A549 (cell line): ENCODE measurements at regions of chr18 and their contacts with region 1.

Region 1: DNA sequence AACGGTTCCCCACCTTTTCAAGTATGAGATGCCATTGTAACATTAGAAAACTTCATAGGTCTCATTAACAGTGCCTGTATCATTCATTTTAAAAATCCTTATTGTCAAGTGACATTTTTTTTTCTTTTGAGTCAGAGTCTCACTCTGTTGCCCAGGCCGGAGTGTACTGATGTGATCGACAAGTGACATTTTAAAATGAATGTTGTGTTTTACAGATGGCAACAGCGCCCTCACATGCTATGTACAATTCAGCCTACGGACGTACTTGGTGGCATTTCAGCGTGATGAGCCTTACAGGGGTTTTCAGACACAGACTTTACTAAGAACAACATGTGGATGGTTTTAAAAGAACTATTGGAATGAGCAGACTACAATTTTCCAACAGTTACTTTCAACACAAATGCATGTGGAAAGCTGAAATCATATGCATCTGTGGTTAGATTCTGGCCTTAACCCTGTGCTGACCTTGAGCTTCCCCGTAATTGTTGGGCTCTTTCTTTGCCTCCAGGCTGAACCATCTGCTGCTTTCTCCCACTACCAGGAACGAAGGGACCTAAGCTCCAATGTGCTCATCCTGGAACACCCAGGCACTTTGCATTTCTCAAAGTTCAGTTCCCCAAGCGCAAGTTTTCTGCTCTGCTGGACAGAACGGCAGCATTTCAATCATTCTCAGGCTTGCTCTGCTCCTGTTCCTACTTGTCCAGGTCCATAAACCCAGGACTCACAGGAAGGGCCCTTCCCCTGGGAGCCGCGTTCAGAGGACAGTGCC is 119.9 kb upstream of the NDUFV2 start:
- DNase-seq: peak; percentile 44 to 83
- ATAC-seq: peak; percentile 89 to 96
- H3K4me3 ChIP-seq: no peak overlapping the region
- H3K27ac ChIP-seq: peak overlapping the region; percentile 56 to 89
- H3K4me1 ChIP-seq: peaks cover 39% of the 10 kb centered on the region
- CTCF ChIP-seq: peak; percentile 73
- EP300 ChIP-seq: no peak
- POLR2A ChIP-seq: no peak
- RAD21 ChIP-seq: peak; percentile 88 to 93

Region 2: DNA sequence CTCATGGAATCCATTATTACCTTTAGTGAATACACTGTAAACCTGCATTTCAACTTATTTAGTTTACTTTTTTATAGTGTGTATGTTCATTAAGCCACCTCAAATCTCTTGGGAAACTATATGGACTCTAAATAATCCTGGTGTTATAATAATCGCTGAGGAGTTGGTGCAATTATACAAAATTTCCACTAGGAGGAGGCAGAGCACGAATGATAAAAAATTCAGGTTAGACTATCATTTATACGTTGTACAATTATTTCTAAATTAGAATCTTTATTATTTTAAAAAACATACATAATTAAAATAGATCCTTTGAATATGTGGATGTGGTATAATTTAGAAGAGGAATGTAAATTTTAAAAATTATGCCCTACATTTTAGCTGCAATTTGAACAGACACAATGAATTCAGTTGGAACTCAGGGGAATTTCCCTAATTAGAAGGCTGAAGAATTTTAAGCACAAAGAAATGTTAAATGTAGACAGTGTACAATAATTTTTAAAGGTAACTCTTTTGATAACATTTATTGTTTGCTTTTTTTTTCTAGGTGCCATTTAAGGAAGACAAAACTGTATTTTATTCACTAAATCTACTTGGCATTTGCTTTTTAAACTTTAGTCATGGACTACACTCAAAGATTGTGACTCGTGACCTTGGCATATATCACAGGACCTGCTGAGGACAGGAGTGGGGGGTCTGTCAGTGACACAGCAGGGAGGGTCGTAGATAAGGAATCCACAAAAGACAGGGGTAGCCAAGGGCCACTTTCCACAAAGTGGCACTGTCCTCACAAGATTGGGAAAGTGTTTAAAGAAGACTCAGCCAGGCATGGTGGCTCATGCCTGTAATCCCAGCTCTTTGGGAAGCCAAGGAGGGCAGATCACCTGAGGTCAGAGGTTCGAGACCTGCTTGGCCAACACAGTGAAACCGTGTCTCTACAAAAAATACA is 327.8 kb before region 1 on chr18:
- CTCF ChIA-PET with region 1: interaction called, 70 read pairs
- POLR2A ChIA-PET with region 1: no interaction called
- DNase-seq: peak; percentile 22 to 43
- ATAC-seq: peak in 1 of 2 experiments; percentile 39; a peak in 1 of 6 replicates
- H3K4me3 ChIP-seq: no peak overlapping the region
- H3K27ac ChIP-seq: peak overlapping the region; percentile 26 to 72; a peak in 4 of 6 replicates
- H3K4me1 ChIP-seq: peaks cover 19% of the 10 kb centered on the region
- CTCF ChIP-seq: peak; percentile 86
- EP300 ChIP-seq: no peak
- POLR2A ChIP-seq: no peak
- RAD21 ChIP-seq: peak; percentile 81 to 83

Region 3: GRCh38 chr18:8696749-8697211 is 285.8 kb before region 1 on chr18:
- CTCF ChIA-PET with region 1: interaction called, 30 read pairs
- POLR2A ChIA-PET with region 1: no interaction called
- DNase-seq: peak; percentile 56 to 60
- ATAC-seq: peak; percentile 85 to 86; a peak in 5 of 6 replicates
- H3K4me3 ChIP-seq: no peak overlapping the region
- H3K27ac ChIP-seq: peak overlapping the region in 1 of 2 experiments; percentile 49; a peak in 1 of 6 replicates
- H3K4me1 ChIP-seq: peaks cover 17% of the 10 kb centered on the region
- CTCF ChIP-seq: peak; percentile 77
- EP300 ChIP-seq: no peak
- POLR2A ChIP-seq: no peak
- RAD21 ChIP-seq: peak; percentile 67 to 68

Region 4: DNA sequence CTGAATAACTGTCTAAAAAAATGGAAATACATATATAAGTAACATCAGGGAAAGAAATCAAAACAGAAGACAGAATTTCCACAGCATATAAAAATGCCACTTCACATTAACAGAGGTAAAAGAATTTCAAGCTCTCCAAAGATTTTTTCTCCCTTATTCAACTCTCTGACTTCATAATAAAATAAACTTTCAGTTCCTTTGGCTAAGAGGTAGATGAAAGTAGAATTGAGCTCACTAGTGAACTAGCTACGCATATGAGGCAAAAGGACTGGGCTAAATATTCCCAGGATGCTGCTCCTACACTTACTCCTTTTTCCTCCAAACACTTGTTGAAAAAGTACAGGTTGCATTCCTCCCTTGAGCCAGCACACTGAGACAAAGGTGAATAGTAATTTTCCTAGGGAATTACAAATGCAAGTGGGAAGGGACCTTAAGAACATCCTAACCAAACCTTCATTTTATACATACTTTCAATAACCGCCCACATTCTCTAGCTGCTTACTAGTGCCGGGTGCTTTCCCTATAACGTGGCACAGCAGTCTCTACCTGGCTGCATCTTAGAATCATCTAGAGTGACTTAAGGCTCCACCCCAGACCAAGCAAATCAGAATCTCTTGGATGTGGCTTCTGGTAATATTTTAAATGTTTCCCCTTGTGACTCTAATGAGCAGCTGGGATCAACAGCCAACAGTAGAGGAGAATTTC is 140.7 kb before region 1 on chr18:
- CTCF ChIA-PET with region 1: interaction called, 13 read pairs
- POLR2A ChIA-PET with region 1: no interaction called
- DNase-seq: no peak
- ATAC-seq: no peak
- H3K4me3 ChIP-seq: no peak overlapping the region
- H3K27ac ChIP-seq: no peak overlapping the region
- H3K4me1 ChIP-seq: no peaks in the 10 kb centered on the region
- CTCF ChIP-seq: no peak
- EP300 ChIP-seq: no peak
- POLR2A ChIP-seq: no peak
- RAD21 ChIP-seq: no peak

Region 5: GRCh38 chr18:8969639-8970390 is 12.8 kb before region 1 on chr18:
- CTCF ChIA-PET with region 1: interaction called, 12 read pairs
- POLR2A ChIA-PET with region 1: no interaction called
- DNase-seq: no peak
- ATAC-seq: no peak
- H3K4me3 ChIP-seq: no peak overlapping the region
- H3K27ac ChIP-seq: peak overlapping the region in 1 of 2 experiments; percentile 21; a peak in 1 of 6 replicates
- H3K4me1 ChIP-seq: no peaks in the 10 kb centered on the region
- CTCF ChIP-seq: no peak
- EP300 ChIP-seq: no peak
- POLR2A ChIP-seq: no peak
- RAD21 ChIP-seq: no peak

Region 6: GRCh38 chr18:9066817-9067306 is 84.3 kb after region 1 on chr18:
- CTCF ChIA-PET with region 1: no interaction called
- POLR2A ChIA-PET with region 1: no interaction called
- DNase-seq: no peak
- ATAC-seq: no peak
- H3K4me3 ChIP-seq: no peak overlapping the region
- H3K27ac ChIP-seq: no peak overlapping the region
- H3K4me1 ChIP-seq: no peaks in the 10 kb centered on the region
- CTCF ChIP-seq: no peak
- EP300 ChIP-seq: no peak
- POLR2A ChIP-seq: no peak
- RAD21 ChIP-seq: no peak

Region 7: DNA sequence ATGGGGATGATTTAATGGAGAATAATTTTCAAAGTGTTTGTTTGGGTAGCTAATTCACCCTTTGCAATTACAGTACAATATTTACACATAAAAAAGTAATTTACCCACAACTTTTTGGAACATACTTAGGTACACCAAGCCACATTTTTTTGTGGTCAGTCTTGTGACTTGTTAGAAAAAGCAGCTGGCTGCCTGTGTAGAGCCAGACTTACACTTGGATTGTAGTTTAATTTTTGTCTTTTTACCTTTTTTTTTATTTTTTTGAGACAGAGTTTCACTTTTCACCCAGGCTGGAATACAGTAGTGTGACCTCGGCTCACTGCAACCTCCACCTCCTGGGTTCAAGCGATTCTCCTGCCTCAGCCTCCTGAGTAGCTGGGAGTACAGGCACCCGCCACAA is 538.1 kb after region 1 on chr18:
- CTCF ChIA-PET with region 1: no interaction called
- POLR2A ChIA-PET with region 1: no interaction called
- DNase-seq: no peak
- ATAC-seq: no peak
- H3K4me3 ChIP-seq: no peak overlapping the region
- H3K27ac ChIP-seq: no peak overlapping the region
- H3K4me1 ChIP-seq: no peaks in the 10 kb centered on the region
- CTCF ChIP-seq: no peak
- EP300 ChIP-seq: no peak
- POLR2A ChIP-seq: no peak
- RAD21 ChIP-seq: no peak